Endothelial cell of umbilical vein (primary cell): ENCODE measurements at regions of chr5 and their contacts with region 1.

Region 1: DNA sequence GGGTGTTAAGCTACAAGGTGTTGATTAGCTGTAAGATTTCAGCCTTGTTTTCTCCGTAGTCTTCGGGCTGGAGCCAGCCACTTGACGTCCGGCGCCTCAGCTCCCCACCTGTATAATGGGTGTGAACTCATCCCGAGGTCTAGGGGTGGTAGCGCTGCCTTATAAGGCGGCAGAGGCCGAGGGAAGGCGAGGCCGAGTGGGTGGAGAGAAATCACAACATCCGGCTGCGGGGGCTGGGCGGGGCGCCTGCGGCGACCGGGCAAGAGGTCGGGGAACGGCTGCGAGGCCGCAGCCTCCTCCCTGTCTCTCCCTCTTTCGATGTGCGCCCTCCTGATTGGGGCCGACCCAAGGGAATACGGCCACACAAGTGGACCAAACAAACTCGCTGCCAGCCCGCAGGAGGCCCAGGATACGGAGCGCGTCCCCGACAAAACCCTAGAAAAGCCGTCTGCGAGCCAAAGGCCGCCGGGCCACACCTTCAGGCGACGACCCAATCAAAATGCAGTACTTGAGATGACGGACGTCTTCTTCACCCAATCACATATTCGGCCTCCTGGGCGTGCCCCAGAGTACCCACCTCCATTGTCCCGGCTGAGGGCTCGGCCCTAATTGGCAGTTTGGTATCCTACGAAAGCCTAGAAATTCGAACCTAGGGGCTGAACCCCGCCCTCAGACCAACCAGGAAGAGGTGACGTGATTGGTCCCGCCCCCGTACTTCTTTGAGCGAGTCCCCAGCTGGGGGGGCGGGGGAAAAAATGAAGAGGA is 493 bp upstream of the GRK6 start:
- DNase-seq: peak; percentile 100
- H3K4me3 ChIP-seq: peak overlapping the region; percentile 40 to 52 (median 51)
- H3K27ac ChIP-seq: peak overlapping the region; percentile 61
- H3K4me1 ChIP-seq: peaks cover 14% of the 10 kb centered on the region
- H3K27me3 ChIP-seq: no peaks in the 10 kb centered on the region
- CTCF ChIP-seq: no peak
- POLR2A ChIP-seq: peak; percentile 56

Region 2: DNA sequence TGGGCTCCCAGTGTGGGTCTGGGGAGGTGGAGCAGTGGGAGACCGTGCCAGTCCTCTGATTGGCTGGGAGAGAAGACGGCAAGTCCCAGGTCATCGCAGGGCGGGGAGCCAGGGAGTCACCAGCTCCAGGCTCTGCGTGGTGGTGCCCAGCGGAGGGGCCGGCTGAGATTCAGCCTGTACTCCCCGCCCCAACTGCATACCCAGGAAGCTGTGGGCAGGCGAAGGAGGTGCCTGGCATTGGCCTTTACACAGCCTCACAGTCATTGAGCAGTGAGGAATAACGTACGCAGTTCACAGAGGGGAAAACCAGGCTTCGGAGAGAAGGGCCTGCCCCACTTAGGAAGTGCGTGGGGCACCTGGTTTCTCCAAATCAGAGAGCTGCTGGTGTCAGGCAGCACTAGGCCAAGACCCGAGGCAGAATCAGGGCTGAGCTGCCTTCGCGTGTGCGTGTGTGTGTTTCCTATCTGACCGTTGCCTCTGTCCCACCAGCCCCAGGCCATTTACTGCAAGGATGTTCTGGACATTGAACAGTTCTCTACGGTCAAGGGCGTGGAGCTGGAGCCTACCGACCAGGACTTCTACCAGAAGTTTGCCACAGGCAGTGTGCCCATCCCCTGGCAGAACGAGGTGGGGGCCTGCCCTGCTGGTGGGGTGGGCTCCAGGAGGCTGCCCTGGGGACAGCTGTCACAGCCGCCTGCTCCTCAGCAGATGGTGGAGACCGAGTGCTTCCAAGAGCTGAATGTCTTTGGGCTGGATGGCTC is 14.4 kb after region 1 on chr5:
- CTCF ChIA-PET with region 1: interaction called, 10 read pairs
- POLR2A ChIA-PET with region 1: interaction called, 4 read pairs
- dilution Hi-C with region 1: no loop called
- intact Hi-C with region 1: no loop called
- DNase-seq: no peak
- H3K4me3 ChIP-seq: no peak overlapping the region
- H3K27ac ChIP-seq: no peak overlapping the region
- H3K4me1 ChIP-seq: no peaks in the 10 kb centered on the region
- H3K27me3 ChIP-seq: no peaks in the 10 kb centered on the region
- CTCF ChIP-seq: no peak
- POLR2A ChIP-seq: no peak

Region 3: DNA sequence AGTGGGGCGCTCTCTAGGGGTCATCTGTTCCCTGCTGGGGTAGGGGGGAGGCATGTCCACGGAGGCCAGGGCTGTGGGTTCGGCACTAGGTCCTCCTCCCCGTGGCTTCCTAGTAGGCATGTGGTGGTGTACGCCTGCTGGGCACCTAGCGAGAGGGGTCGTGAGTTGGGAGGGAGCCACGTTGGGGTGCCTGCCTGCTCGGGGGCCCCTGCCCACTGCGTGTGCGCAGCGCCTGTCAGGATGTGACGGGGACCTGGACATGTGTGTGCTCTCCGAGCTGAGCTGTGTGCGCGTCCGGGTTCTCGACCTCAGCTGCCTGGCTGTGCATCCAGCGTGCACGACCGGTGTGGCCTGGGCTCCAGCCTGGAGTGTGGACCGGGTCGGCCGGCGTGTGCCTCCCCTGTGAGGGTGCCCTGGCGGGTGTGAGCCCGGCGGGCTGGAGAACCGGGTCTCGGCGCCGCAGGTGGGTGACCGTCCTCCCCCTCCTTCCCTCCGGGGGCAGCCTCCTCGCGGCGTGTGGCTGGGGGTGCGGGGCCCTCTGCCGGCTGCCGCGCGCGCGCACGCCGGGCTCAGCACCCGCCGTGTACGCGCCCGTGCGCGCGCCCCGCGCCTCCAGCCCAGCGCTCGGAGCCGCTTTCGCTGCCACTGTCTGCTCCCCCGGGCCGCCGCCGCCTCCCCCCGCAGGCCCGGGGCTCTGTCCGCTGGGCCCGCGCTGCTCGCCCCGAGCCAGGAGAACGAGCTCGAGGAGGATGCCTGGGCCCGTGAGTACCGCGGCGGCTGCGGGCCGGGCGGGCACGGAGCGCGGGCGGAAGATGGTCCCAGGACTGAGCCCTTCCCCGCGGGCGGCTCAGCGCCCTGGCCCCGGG is 20.4 kb after region 1 on chr5 and contains the start of gene PRR7:
- CTCF ChIA-PET with region 1: interaction called, 10 read pairs
- POLR2A ChIA-PET with region 1: interaction called, 4 read pairs
- dilution Hi-C with region 1: no loop called
- intact Hi-C with region 1: loop called (anchors 1 kb)
- DNase-seq: peak; percentile 56
- H3K4me3 ChIP-seq: peak within 1 kb of the TSS; percentile 11 to 58 (median 18)
- H3K27ac ChIP-seq: no peak within 1 kb of the TSS
- H3K4me1 ChIP-seq: peaks cover 14% of the 10 kb centered on the region
- H3K27me3 ChIP-seq: no peaks in the 10 kb centered on the region
- CTCF ChIP-seq: peak in 1 of 2 donors; percentile 10
- POLR2A ChIP-seq: peak; percentile 67
- total RNA-seq, gene PRR7: 5.7 and 6.5 TPM in 2 replicates